PC-9 (cell line): ENCODE measurements at regions of chr5 and their contacts with region 1.

Region 1: GRCh38 chr5:59390074-59390659 is 503.4 kb downstream of the PDE4D start:
- DNase-seq: no peak
- H3K4me3 ChIP-seq: no peak overlapping the region
- H3K27ac ChIP-seq: no peak overlapping the region
- H3K4me1 ChIP-seq: no peaks in the 10 kb centered on the region
- H3K27me3 ChIP-seq: no peaks in the 10 kb centered on the region
- CTCF ChIP-seq: peak; percentile 88

Region 2: DNA sequence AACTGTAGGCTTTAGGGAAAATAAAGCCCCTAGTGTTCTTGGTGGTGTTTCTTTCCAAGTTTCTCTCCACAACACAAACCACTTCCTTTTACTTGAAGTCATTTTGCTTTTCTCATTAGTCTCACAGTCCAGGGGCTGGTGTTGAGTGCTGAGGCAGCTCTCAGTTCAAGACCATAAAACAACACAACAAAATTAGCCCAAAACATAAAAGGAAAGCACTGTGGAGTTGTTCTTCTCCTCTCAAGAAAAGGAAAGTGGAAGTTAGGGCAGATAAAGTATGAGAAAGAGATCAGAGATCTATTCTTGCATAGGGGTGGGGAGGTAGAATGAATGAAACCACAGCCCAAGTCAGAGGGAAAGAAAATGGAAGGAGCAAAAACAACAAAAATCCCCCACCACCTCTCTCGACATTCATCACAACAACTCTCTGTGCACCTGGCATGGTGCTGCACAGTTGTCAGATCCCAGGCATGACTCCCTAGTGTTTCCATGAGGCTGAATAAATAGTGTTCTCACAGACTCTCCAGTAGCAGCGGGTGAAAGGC is 237.4 kb before region 1 on chr5:
- CTCF ChIA-PET with region 1: no interaction called
- POLR2A ChIA-PET with region 1: no interaction called
- intact Hi-C with region 1: no loop called
- DNase-seq: no peak
- H3K4me3 ChIP-seq: no peak overlapping the region
- H3K27ac ChIP-seq: no peak overlapping the region
- H3K4me1 ChIP-seq: no peaks in the 10 kb centered on the region
- H3K27me3 ChIP-seq: no peaks in the 10 kb centered on the region
- CTCF ChIP-seq: no peak

Region 3: GRCh38 chr5:59351076-59351794 is 38.9 kb before region 1 on chr5:
- CTCF ChIA-PET with region 1: no interaction called
- POLR2A ChIA-PET with region 1: no interaction called
- intact Hi-C with region 1: no loop called
- DNase-seq: no peak
- H3K4me3 ChIP-seq: no peak overlapping the region
- H3K27ac ChIP-seq: no peak overlapping the region
- H3K4me1 ChIP-seq: no peaks in the 10 kb centered on the region
- H3K27me3 ChIP-seq: no peaks in the 10 kb centered on the region
- CTCF ChIP-seq: no peak

Region 4: DNA sequence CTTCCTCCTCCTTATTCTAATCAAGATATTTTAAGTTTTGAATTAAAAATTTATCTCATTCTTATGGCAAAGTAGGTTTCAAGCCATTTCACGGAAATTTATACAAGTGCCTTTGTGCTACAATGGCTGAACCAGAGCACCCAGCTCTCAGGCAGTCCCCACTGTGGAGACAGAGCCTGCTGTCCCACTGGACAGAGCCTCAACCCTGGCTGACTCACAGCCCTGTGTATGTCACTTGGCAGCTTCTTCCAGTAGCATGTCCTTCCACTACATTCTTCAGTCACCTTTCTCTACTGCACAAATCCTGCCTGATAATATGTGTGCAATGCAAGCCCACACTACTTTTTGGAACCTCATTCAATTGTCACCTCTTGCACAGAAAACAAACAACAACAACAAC is 250.2 kb after region 1 on chr5:
- CTCF ChIA-PET with region 1: no interaction called
- POLR2A ChIA-PET with region 1: no interaction called
- intact Hi-C with region 1: no loop called
- DNase-seq: peak; percentile 11 to 40
- H3K4me3 ChIP-seq: no peak overlapping the region
- H3K27ac ChIP-seq: no peak overlapping the region
- H3K4me1 ChIP-seq: peaks cover 4% of the 10 kb centered on the region; the same call in 1 of the 2 replicates
- H3K27me3 ChIP-seq: no peaks in the 10 kb centered on the region
- CTCF ChIP-seq: no peak

Region 5: DNA sequence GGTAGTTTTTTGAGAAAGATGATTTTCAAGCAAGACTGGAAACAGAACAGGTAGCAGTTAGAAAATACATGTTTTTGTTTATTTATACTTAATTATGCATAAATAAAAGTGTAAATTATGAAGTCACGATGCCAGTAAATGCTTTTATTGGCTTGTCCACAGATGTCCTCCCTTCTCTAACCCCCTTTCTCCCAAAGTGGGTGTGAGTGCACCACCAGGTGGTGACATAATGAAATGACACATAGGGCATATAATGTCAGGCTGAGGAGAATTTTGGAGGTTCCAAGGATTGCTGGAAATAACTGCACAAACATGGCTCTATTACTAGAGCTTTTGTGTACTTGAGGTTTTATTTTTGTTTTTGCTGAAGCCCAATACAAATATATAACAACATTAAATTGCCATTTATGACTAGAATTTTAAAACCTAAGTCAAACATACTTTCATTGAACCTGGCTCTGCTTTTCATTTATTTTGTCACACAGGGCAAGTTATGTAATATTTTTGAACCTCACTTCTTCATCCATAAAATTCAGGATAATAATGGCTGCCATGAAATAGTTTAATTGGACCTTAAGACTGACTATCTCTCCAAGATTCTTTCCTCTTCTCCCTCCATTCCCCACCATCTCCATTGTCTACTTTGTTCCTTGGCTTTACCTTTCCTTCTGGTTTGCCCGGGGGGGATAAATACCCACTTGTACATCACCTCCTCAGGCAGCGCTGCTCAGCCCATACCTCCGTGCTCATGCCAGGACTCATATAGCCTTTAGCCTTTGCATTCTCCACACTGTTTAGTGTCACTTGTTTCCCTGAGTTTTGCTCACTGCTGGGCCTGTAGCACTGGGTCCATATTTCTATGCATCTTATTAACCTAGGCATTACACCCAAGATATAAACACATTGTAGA is 334.6 kb after region 1 on chr5:
- CTCF ChIA-PET with region 1: no interaction called
- POLR2A ChIA-PET with region 1: interaction called, 4 read pairs
- intact Hi-C with region 1: loop called (anchors 1 kb)
- DNase-seq: peak in 1 of 2 experiments; percentile 9
- H3K4me3 ChIP-seq: no peak overlapping the region
- H3K27ac ChIP-seq: no peak overlapping the region
- H3K4me1 ChIP-seq: peaks cover 12% of the 10 kb centered on the region
- H3K27me3 ChIP-seq: no peaks in the 10 kb centered on the region
- CTCF ChIP-seq: peak; percentile 64